Heart right ventricle (tissue), 16 donors: ENCODE measurements at regions of chr11 and their contacts with region 1.

Region 1: DNA sequence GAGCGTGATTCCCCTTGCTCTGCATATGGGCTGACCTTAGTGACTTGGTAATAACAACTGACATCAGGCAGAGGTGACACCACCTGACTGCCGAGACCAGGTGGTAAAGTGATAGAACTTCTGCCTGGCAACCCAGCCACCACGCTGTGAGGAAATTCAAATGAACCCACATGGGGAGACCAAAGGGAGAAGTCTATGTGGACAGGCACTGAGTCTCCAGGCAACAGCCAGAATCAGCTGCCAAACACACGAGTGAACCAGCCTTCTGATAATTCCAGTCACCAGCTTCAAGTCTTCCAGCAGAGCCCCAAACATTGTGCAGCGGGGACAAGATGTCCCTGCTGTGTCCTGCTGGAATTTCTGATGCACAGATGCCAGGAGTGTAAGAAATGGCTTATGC is 29.7 kb downstream of the SPATA19 start:
- DNase-seq: no peak
- ATAC-seq: peak in 6 of 8 donors; percentile 44 to 96 (median 68)
- H3K4me3 ChIP-seq: no peak overlapping the region
- H3K27ac ChIP-seq: no peak overlapping the region
- H3K4me1 ChIP-seq: peaks cover 0 to 14% (median 7%) of the 10 kb centered on the region in 9 donors
- H3K27me3 ChIP-seq: peaks cover 0 to 33% (median 14%) of the 10 kb centered on the region in 7 donors
- CTCF ChIP-seq: no peak

Region 2: GRCh38 chr11:133156986-133157745 is 658.5 kb before region 1 on chr11:
- intact Hi-C with region 1: loop called in 2 of 10 experiments (anchors 5 to 10 kb)
- DNase-seq: peak; percentile 13 to 37
- ATAC-seq: peak in 2 of 8 donors; percentile 16 to 67
- H3K4me3 ChIP-seq: no peak overlapping the region
- H3K27ac ChIP-seq: no peak overlapping the region
- H3K4me1 ChIP-seq: no peaks in the 10 kb centered on the region
- H3K27me3 ChIP-seq: peaks cover 0 to 84% (median 58%) of the 10 kb centered on the region in 7 donors
- CTCF ChIP-seq: peak; percentile 11 to 57 (median 35)

Region 3: GRCh38 chr11:133864756-133865155 is 49.1 kb after region 1 on chr11:
- intact Hi-C with region 1: no loop called
- DNase-seq: no peak
- ATAC-seq: peak in 1 of 8 donors; percentile 50
- H3K4me3 ChIP-seq: no peak overlapping the region
- H3K27ac ChIP-seq: no peak overlapping the region
- H3K4me1 ChIP-seq: no peaks in the 10 kb centered on the region
- H3K27me3 ChIP-seq: peaks cover 0 to 28% (median 5%) of the 10 kb centered on the region in 7 donors
- CTCF ChIP-seq: no peak